ENCODE measurements at regions of chr19 and their contacts with region 1.

Region 1: GRCh38 chr19:47697863-47698609 is 15.2 kb upstream of the EHD2 start:
- DNase-seq: peak; percentile 75 to 89
- ATAC-seq: peak; percentile 84 to 93 (median 90)
- H3K4me3 ChIP-seq: no peak overlapping the region
- H3K27ac ChIP-seq: peak overlapping the region; percentile 59
- H3K4me1 ChIP-seq: no peaks in the 10 kb centered on the region
- H3K27me3 ChIP-seq: no peaks in the 10 kb centered on the region
- CTCF ChIP-seq: peak; percentile 97

Region 2: DNA sequence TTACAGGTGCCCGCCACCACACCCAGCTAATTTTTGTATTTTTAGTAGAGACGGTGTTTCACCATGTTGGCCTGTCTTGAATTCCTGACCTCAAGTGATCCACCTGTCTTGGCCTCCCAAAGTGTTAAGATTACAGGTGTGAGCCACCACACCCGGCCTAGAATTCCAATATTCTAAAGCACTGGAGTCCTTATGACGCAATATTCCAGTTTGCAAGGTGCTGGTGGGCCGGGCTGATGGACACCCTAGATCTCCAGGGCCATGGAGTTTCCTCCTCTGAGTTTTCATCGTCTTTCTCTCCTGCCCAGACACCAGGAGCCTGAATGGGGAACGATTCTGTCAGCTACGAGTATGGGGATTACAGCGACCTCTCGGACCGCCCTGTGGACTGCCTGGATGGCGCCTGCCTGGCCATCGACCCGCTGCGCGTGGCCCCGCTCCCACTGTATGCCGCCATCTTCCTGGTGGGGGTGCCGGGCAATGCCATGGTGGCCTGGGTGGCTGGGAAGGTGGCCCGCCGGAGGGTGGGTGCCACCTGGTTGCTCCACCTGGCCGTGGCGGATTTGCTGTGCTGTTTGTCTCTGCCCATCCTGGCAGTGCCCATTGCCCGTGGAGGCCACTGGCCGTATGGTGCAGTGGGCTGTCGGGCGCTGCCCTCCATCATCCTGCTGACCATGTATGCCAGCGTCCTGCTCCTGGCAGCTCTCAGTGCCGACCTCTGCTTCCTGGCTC is 357.4 kb before region 1 on chr19:
- intact Hi-C with region 1: no loop called
- DNase-seq: no peak
- ATAC-seq: no peak
- H3K4me3 ChIP-seq: no peak overlapping the region
- H3K27ac ChIP-seq: no peak overlapping the region
- H3K4me1 ChIP-seq: no peaks in the 10 kb centered on the region
- H3K27me3 ChIP-seq: peaks cover 0 to 3% (median 0%) of the 10 kb centered on the region in 3 donors
- CTCF ChIP-seq: no peak

Region 3: GRCh38 chr19:47436712-47437401 is 261.2 kb before region 1 on chr19:
- intact Hi-C with region 1: loop called (anchors 2 kb)
- DNase-seq: peak; percentile 77 to 87
- ATAC-seq: peak; percentile 91 to 100 (median 99)
- H3K4me3 ChIP-seq: no peak overlapping the region
- H3K27ac ChIP-seq: no peak overlapping the region
- H3K4me1 ChIP-seq: no peaks in the 10 kb centered on the region
- H3K27me3 ChIP-seq: peaks cover 0 to 57% (median under 1%) of the 10 kb centered on the region in 3 donors
- CTCF ChIP-seq: peak; percentile 90

Region 4: GRCh38 chr19:47514869-47515588 is 183.0 kb before region 1 on chr19 and contains the start of gene NAPA:
- intact Hi-C with region 1: loop called (anchors 5 to 10 kb)
- DNase-seq: peak; percentile 100
- ATAC-seq: peak; percentile 92 to 96 (median 94)
- H3K4me3 ChIP-seq: peak within 1 kb of the TSS; percentile 95
- H3K27ac ChIP-seq: peak within 1 kb of the TSS; percentile 99
- H3K4me1 ChIP-seq: peaks cover 36% of the 10 kb centered on the region
- H3K27me3 ChIP-seq: no peaks in the 10 kb centered on the region
- CTCF ChIP-seq: no peak
- total RNA-seq, gene NAPA: 124 to 182 (median 159) TPM

Region 5: DNA sequence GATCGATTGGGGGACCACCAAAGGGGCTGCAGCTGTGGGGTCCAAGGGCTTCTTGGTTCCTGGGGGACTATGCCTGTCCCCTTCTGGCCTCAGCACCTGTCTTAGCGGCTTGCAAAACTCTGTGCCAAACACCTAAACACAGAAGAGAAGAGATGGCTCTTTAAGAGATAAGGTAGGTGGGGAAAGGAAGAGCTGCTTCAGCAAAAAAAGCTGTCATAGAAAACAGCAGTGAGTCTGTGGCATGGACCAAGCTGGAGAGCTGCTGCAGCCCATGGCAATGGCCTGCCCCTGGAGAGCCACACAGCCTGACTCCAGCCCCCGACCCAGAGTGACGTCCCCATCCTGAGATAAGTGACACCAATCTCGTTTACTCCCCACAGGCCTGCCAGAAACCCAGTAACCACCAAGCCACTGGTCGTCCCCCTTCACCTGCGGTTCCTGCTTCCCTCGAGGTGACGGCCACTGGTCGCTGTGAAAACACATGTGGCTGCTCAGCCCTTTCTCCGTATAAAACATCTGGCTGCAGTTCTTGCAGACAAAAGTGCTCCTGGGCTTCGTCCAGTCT is 158.2 kb before region 1 on chr19:
- intact Hi-C with region 1: loop called (anchors 5 kb)
- DNase-seq: no peak
- ATAC-seq: no peak
- H3K4me3 ChIP-seq: no peak overlapping the region
- H3K27ac ChIP-seq: no peak overlapping the region
- H3K4me1 ChIP-seq: no peaks in the 10 kb centered on the region
- H3K27me3 ChIP-seq: peaks cover 0 to 11% (median 6%) of the 10 kb centered on the region in 3 donors
- CTCF ChIP-seq: no peak

Region 6: DNA sequence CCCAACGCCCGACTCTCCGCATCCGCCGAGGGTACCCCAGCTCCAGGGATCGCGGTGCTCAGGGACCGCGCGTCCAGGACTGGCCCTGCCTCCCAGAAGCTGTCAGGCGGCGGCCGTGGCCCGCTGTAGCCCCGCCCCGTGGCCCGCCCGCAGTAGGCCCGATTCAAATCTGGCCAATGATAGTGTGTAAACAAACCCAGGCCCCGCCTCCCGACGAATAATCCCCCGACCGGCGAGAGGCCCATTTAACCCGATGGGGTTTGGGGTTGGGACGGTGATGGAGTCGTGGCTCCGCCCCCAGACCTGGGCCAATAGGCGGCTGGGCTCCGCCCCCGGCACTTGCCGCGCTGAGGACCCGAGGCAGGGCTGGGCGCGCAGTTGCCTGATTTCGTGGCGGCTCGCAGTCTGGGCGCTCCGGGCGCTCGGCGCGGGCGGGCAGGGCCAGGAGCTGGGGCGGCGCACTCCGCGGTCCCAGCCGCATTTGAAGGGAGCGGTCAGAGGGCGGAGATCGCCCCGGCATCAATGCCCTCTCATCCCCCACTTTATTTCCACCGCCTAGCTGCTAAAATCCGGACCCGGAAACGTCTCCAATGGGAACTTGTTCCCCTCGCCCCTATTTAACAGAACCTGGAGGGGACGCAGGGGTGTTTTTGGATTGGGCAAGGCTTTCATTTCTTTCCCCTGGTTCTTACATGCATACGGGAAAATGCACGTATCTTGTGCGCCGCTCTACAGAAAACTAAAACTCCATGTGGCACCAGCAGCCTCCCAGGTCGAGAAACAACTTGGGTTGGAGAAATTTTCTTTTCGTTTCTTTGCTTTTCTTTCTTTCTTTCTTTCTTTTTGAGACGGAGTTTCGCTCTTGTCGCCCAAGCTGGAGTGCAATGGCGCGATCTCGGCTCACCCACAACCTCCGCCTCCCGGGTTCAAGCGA is 97.5 kb before region 1 on chr19:
- intact Hi-C with region 1: loop called in 1 of 2 experiments (anchors 5 kb)
- DNase-seq: peak; percentile 100
- ATAC-seq: peak; percentile 95 to 98 (median 96)
- H3K4me3 ChIP-seq: peak overlapping the region; percentile 76
- H3K27ac ChIP-seq: peak overlapping the region; percentile 88
- H3K4me1 ChIP-seq: peaks cover 16% of the 10 kb centered on the region
- H3K27me3 ChIP-seq: no peaks in the 10 kb centered on the region
- CTCF ChIP-seq: no peak

Region 7: GRCh38 chr19:47608074-47608918 is 89.7 kb before region 1 on chr19:
- intact Hi-C with region 1: loop called (anchors 2 to 5 kb)
- DNase-seq: peak; percentile 95 to 97
- ATAC-seq: peak; percentile 88 to 93 (median 91)
- H3K4me3 ChIP-seq: peak overlapping the region; percentile 100
- H3K27ac ChIP-seq: peak overlapping the region; percentile 100
- H3K4me1 ChIP-seq: peaks cover 31% of the 10 kb centered on the region
- H3K27me3 ChIP-seq: no peaks in the 10 kb centered on the region
- CTCF ChIP-seq: peak; percentile 43

Measured in psoas muscle (tissue), 8 donors.